Mammary epithelial cell (primary cell): ENCODE measurements at regions of chr4 and their contacts with region 1.

Region 1: DNA sequence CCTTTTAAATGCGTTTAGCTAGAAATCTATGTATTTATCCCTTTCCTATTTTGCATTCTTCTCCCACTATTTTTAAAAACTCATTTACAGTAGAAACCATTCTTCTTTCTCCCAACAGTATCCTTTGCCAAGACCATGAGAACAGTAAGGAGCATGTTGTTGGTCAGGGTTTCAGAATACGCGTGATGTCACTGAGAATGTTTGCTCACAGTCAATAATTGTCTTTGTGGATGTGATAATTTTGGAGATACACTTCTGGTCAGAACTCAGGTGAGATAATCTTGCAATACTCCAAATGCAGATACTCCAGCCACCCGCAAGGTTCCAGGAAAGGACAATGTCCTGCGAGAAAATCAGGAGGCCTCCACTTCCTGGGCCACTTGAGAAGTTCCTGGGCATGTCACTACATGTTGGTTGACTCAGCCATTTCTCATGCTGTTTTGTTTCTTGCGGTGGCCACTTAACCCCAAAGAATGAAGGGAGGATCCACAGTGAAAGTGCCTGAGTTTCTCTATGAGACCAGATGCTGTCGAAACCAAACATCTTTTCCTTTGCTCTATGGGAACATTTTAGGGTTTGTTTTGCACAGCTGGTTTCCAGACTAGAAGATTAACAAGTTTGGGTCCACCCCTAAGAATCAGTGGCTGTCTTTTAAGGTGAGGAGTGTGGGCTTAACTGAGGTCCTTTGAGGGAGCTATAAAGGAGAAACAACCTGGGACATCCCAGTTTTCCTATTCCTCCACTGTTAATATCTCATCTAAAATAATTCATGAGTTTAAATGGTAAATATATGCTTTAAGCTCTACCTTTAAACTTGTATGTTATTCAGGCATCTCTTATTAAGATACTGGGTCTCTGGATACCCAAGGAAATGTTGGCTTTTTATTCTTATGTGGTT is 116.0 kb downstream of the SOWAHB start:
- DNase-seq: peak; percentile 100
- H3K4me3 ChIP-seq: peak overlapping the region; percentile 23 to 52 (median 32)
- H3K27ac ChIP-seq: peak overlapping the region; percentile 100
- H3K4me1 ChIP-seq: peaks cover 33% of the 10 kb centered on the region
- H3K27me3 ChIP-seq: no peaks in the 10 kb centered on the region
- CTCF ChIP-seq: no peak

Region 2: GRCh38 chr4:76803522-76803921 is 21.6 kb after region 1 on chr4:
- CTCF ChIA-PET with region 1: no interaction called
- dilution Hi-C with region 1: no loop called
- in situ Hi-C with region 1: no loop called
- intact Hi-C with region 1: loop called (anchors 1 kb)
- DNase-seq: peak; percentile 97
- H3K4me3 ChIP-seq: no peak overlapping the region
- H3K27ac ChIP-seq: peak overlapping the region; percentile 83
- H3K4me1 ChIP-seq: peaks cover 13% of the 10 kb centered on the region
- H3K27me3 ChIP-seq: no peaks in the 10 kb centered on the region
- CTCF ChIP-seq: no peak

Region 3: GRCh38 chr4:76881375-76881774 is 99.4 kb after region 1 on chr4:
- CTCF ChIA-PET with region 1: no interaction called
- dilution Hi-C with region 1: no loop called
- in situ Hi-C with region 1: no loop called
- intact Hi-C with region 1: loop called (anchors 5 kb)
- DNase-seq: peak; percentile 71
- H3K4me3 ChIP-seq: no peak overlapping the region
- H3K27ac ChIP-seq: no peak overlapping the region
- H3K4me1 ChIP-seq: peaks cover 5% of the 10 kb centered on the region
- H3K27me3 ChIP-seq: no peaks in the 10 kb centered on the region
- CTCF ChIP-seq: peak in 1 of 2 donors; percentile 3